ENCODE measurements at regions of chr12 and their contacts with region 1.

Region 1: GRCh38 chr12:11648831-11649702 is at the start of gene ETV6:
- DNase-seq: peak; percentile 86
- total RNA-seq, gene ETV6: 18.4 TPM

Region 2: DNA sequence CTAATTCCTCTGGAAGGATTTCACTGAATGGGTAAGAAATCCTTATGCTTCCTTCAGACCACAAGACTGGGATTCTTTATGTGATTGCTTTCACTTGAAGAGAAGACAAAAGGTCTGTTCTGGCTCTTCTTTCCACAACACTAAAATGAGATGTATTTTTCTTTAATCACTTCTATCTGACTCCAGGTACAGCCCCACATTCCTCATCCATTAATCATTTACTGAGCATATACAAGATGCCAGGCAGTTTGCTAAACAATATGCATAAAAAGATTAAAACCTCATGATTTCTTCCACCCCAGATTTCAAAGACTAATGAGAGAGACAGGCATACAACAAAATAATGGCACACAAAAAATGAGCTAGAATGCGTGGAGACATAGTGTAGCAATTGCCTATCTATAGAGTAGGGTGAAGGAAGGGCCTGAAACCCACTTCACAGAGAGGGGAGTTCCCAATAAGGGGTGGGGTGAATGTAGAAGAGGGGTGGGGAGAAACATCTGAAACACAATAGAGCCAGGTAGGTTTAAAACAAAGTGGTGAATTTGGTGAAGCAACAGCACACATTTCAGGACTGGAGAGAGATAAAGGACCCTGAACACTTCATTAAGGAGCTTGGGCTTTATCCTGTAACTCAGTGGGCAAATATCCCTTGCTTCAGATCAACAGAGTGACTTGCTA is 188.6 kb before region 1 on chr12:
- intact Hi-C with region 1: no loop called
- DNase-seq: no peak

Region 3: GRCh38 chr12:11705010-11705409 is 55.9 kb after region 1 on chr12:
- intact Hi-C with region 1: loop called (anchors 5 kb)
- DNase-seq: no peak

Region 4: GRCh38 chr12:11758510-11759493 is 109.7 kb after region 1 on chr12:
- intact Hi-C with region 1: loop called (anchors 5 kb)
- DNase-seq: no peak

Region 5: DNA sequence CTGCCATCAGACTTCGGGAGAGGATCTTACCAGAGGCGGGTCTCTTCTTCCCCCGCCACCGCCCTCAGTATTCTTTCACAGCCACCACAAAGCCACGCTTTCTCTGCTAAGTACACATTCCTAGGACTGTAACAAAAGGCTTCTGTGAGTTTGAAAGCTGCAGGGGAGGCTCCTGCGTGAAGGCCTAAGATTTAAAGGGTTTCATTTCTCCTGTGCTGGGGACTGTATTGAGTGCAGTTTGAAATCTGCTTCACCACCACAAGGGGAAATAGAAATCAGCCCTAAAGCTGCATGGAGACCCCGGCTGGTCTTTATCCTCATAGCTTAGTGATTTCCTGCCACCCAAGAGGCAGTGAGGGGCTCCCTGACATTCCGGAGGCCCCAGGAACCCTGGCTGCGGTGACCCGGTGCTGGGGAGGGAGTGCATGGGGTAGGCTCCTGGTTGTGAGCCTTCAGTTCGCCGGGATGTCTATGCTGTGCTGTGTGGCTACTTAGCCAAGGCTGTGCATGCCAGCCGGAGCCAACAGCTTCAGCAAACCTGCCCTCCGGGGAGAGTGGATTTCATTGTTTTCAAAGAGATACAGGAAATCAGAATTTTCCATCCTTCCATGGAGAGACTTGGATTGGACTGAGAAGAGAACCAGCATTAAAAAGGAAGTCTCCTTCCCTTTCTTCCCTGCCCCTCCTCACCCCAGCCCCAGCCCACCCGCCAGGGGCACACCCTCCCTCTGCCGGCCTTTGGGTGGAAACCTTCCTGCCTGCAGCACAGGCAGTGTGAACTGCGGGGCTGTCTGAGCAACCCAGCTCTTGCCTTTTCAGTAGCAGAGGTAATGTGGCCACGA is 163.7 kb after region 1 on chr12:
- intact Hi-C with region 1: loop called (anchors 5 kb)
- DNase-seq: no peak

Region 6: GRCh38 chr12:11862798-11863197 is 213.7 kb after region 1 on chr12:
- intact Hi-C with region 1: loop called (anchors 2 kb)
- DNase-seq: no peak

Region 7: GRCh38 chr12:11891754-11892386 is 242.8 kb after region 1 on chr12:
- intact Hi-C with region 1: loop called (anchors 5 kb)
- DNase-seq: no peak

Region 8: DNA sequence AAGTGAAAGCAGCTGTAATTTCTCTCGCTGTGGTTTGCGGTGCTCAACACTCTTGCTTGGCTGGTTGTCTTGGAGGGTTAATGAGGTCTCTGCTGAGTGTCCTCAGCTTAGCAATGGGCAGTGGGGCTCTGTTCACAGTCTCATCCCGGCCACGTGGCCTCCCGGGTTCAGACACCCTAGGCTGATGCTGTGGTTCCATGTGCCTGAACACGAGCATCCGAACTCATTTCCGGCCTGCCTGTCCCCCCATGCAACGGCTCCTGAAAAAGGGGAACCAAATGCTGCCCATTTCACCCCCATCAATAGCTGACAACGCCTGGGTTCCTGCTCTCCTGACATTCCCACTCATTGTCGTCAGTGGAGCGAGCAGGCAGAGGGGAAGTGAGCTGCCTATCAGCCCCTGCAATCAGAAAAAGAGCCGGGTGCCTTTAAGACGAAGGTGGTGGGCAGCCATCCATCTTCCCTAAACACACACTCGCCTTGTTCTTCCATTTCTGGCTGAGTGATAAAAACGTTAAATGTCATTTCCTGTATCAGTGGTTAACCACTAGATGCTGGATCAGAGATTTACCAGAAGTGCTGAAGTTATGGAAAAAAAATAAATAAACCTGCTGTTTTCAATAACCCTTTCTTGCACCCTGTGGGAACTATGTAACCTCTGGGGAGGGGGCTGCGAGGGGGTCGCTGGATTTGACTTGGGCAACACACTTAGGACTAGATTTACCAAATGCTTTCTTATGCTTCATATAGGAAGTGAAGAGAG is 361.4 kb after region 1 on chr12:
- intact Hi-C with region 1: loop called (anchors 10 kb)
- DNase-seq: peak; percentile 83